Left ventricle myocardium inferior (tissue), 1 donor: ENCODE measurements at regions of chr5 and their contacts with region 1.

Region 1: DNA sequence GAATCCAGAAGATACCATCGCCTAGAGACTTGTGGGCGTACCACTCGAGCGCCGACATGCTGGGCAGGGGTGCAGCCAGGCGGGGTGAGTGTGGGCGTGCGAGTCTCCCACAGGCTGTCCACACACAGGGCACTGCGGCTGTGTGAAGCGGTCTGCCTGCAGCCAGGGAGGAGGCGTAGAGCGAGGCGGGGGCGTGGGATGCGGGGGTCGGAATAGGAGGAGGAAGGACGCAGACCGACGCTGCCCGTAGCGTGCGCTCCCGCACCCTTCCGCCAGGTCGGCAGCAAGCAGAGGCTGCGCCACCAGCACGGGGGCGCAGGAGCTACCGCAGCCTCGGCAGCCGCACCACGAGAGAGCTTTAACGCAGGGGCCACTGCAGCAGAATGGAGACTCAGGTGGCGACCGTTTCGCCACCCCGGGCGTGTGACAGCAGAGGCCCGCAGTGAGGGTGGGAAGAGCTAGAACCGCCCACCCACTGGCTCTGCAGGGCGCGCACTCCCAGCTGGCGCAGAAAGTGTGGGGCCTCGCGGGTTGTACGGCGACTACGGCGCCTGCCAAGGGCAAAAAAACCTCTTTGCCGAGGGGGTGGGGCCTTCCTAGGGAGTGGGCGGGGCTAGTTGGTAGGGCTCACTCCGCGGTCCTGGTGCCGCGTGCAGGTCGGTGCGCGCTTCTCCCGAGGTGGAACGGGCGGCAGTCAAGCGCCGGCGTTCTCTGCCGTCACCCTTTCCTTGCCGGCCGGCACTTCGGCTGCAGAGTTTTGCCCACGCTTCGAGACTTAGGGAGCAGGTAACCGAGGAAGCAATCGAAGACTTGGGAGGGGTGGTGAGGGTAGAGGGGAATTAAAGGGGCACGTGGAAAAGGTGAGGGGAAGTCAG is at the starts of genes MBLAC2 and POLR3G:
- DNase-seq: peak; percentile 90
- H3K4me3 ChIP-seq: peak within 1 kb of the TSS; percentile 87
- H3K27ac ChIP-seq: peak within 1 kb of the TSS; percentile 92
- H3K4me1 ChIP-seq: peaks cover 35% of the 10 kb centered on the region
- H3K27me3 ChIP-seq: no peaks in the 10 kb centered on the region
- CTCF ChIP-seq: peak; percentile 67
- total RNA-seq, gene MBLAC2: 3.6 TPM
- total RNA-seq, gene POLR3G: 0.88 TPM

Region 2: GRCh38 chr5:90119531-90120006 is 354.9 kb before region 1 on chr5:
- intact Hi-C with region 1: no loop called
- DNase-seq: no peak
- H3K4me3 ChIP-seq: no peak overlapping the region
- H3K27ac ChIP-seq: no peak overlapping the region
- H3K4me1 ChIP-seq: no peaks in the 10 kb centered on the region
- H3K27me3 ChIP-seq: no peaks in the 10 kb centered on the region
- CTCF ChIP-seq: no peak

Region 3: GRCh38 chr5:90529194-90529938 is 54.9 kb after region 1 on chr5 and contains the start of gene LYSMD3:
- intact Hi-C with region 1: loop called (anchors 10 kb)
- DNase-seq: peak; percentile 99
- H3K4me3 ChIP-seq: peak within 1 kb of the TSS; percentile 97
- H3K27ac ChIP-seq: peak within 1 kb of the TSS; percentile 95
- H3K4me1 ChIP-seq: peaks cover 50% of the 10 kb centered on the region
- H3K27me3 ChIP-seq: peaks cover 18% of the 10 kb centered on the region
- CTCF ChIP-seq: no peak
- total RNA-seq, gene LYSMD3: 19.8 TPM

Region 4: GRCh38 chr5:91219091-91219802 is 744.8 kb after region 1 on chr5:
- intact Hi-C with region 1: no loop called
- DNase-seq: no peak
- H3K4me3 ChIP-seq: no peak overlapping the region
- H3K27ac ChIP-seq: peak overlapping the region; percentile 54
- H3K4me1 ChIP-seq: peaks cover 12% of the 10 kb centered on the region
- H3K27me3 ChIP-seq: no peaks in the 10 kb centered on the region
- CTCF ChIP-seq: no peak